Posterior vena cava (tissue), 2 donors: ENCODE measurements at regions of chr14 and their contacts with region 1.

Region 1: GRCh38 chr14:64930085-64930843 is 12.3 kb downstream of the GPX2 start:
- DNase-seq: no peak

Region 2: GRCh38 chr14:64221391-64222003 is 708.8 kb before region 1 on chr14:
- intact Hi-C with region 1: no loop called
- DNase-seq: no peak

Region 3: DNA sequence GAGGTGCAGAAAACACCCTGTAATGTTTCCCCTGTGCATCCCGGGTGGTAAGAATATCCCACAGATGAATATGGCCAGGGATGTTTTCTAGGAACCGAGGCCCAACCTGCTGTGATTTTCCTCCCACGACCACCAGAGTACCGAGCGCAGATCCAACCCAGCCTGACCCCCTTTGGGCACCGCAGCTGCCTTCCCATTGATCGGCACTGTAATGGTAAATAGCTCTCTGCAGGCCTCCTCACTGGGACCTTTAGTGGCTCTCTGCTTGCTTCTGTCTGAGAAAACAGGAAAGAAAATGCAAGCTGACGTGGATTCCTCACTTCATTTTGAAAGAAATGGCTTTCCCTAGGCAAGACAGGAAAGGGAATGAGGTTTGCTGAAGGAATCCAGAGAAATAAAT is 44.3 kb after region 1 on chr14:
- intact Hi-C with region 1: loop called in 1 of 2 experiments (anchors 1 kb)
- DNase-seq: no peak